HEK293 (cell line): ENCODE measurements at regions of chr17 and their contacts with region 1.

Region 1: DNA sequence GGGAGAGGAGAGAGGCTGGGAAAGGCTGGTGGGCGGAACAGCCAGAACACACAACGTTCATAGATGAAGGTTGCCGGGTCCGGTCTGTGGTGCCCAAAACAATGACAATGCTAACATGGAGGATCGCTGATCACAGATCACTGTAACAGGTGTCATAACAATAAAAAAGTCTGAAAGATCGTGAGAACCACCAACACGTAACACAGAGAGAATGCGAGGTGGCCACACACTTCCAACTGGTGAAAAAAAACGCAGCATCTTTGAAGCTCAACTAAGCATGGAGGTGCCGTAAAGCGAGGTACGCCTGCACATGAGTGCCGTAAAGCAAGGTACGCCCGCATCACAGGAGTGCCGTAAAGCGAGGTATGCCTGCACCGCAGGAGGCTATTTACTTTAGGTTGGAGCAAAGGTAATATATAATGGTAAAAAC is 42.3 kb downstream of the ABR start:
- H3K4me3 ChIP-seq: no peak overlapping the region
- H3K27ac ChIP-seq: no peak overlapping the region
- H3K4me1 ChIP-seq: peaks cover 7% of the 10 kb centered on the region
- CTCF ChIP-seq: no peak

Region 2: DNA sequence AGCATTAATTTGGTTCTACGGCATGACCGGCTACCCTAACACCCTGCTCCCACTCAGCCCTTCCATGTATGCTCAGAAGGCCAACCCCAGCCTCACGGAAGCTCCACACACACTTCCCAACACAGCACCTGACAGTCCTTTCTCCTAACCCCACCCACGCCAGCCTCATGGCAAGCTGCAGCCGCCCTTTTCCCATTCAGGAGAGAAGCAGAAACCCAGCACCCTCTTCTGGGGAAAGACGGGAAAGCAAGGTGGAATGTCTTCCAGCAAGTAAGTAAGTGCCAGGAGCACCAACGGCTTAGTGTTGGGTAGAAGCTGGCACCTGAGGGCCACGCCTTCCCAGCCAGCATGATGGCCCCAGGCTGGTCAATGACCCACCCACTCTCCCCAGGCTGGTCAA is 10.2 kb after region 1 on chr17:
- CTCF ChIA-PET with region 1: interaction called, 15 read pairs
- POLR2A ChIA-PET with region 1: no interaction called
- H3K4me3 ChIP-seq: no peak overlapping the region
- H3K27ac ChIP-seq: no peak overlapping the region
- H3K4me1 ChIP-seq: peaks cover 8% of the 10 kb centered on the region
- CTCF ChIP-seq: peak; percentile 79; the same call in 1 of the 2 replicates